Posterior vena cava (tissue), 2 donors: ENCODE measurements at regions of chr17 and their contacts with region 1.

Region 1: DNA sequence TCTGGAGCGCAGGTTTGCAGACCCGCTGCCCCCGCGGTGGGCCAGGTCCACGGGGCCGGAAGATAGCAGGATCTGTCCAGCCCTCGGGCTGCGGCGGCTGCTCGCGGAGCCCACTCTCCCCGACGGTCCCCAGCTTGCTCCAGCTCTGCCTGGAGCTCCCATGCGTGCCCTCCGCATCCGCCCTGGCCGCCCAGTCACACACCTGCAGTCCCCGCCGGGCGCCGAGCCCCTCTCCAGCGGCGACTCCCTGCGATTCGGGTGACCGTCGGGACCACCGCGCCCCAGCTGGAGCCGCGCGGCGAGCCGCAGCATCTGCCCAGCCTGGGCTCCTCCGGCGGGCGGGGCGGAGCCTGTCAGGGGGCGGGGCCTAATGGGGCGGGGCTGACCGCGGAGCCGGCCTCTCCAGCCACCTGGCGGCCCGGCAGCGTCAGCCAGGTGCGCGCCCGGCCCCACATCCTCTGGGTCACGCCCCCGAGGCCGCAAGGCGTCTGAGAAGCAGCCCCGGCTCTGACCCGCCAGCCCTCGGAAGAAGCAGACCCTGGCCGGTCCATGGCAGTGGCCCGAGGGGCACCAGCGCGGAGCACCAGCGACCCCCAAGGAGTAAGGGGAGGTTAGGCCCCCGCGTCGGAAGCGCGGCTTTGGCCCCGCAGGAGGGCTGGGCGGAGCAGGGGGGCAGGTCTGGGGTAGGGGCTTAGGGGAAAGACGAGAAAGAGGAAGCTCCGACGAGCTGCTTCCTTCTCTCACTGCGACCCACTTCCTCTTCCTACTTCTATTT is at the start of gene PIK3R5:
- DNase-seq: peak; percentile 89
- total RNA-seq, gene PIK3R5: 15.2 to 18.0 TPM

Region 2: GRCh38 chr17:8930649-8931048 is 34.9 kb before region 1 on chr17:
- intact Hi-C with region 1: loop called in 1 of 2 experiments (anchors 2 kb)
- DNase-seq: no peak

Region 3: GRCh38 chr17:9177212-9177611 is 211.6 kb after region 1 on chr17:
- intact Hi-C with region 1: no loop called
- DNase-seq: no peak